ENCODE measurements at regions of chr19 and their contacts with region 1.

Region 1: GRCh38 chr19:4375164-4376027 is 25.0 kb downstream of the SH3GL1 start:
- DNase-seq: peak; percentile 90
- ATAC-seq: peak; percentile 78
- H3K4me3 ChIP-seq: peak overlapping the region; percentile 52
- H3K27ac ChIP-seq: peak overlapping the region; percentile 93
- H3K4me1 ChIP-seq: peaks cover 88% of the 10 kb centered on the region
- H3K27me3 ChIP-seq: no peaks in the 10 kb centered on the region
- CTCF ChIP-seq: peak; percentile 58 to 69 (median 58)
- EP300 ChIP-seq: no peak
- POLR2A ChIP-seq: peak; percentile 18; the same call in 1 of the 2 replicates
- RAD21 ChIP-seq: 0 out of 2 replicates have a peak, but pooled peaks have one; percentile 27

Region 2: DNA sequence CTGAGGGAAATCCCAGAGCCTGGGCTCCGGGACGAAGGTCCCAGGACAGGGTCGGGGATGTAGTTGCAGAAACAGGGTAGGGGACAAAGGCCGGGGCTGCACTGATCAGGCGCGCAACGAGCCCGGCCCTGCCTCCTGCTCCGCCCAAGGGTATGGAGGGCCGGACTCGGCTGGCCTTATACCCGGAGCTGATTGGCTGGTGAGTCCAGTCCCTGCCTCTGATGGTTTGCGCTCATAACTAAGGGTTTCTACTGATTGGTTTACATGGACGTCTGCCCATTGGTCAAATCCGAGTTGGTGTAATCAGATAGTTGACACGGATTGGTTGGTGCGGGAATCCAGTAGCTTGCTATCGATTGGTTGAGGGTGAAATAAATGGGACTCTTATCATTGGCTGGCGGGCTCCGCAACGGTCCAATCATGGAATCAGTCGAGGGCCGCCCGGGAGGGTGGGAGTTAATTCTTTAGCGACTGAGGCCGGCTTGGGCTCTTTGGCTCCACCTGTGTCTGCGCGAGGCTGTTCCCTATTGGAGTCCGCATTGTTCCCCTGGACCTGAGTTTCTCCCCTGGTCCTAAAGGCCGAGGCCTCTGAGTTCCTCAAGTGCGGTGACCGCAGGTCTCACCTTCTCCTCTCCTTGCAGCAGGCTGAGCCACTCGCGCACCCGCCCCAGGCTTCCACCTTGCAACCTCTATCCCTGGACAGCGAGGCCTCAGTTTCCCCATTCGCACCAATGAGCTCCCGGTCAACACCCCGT is 32.6 kb before region 1 on chr19:
- CTCF ChIA-PET with region 1: interaction called, 8 read pairs
- POLR2A ChIA-PET with region 1: interaction called, 10 read pairs
- RAD21 ChIA-PET with region 1: interaction called, 9 read pairs
- SMC1A ChIA-PET with region 1: no interaction called
- in situ Hi-C with region 1: no loop called
- intact Hi-C with region 1: no loop called
- DNase-seq: peak; percentile 100
- ATAC-seq: peak; percentile 95
- H3K4me3 ChIP-seq: peak overlapping the region; percentile 86
- H3K27ac ChIP-seq: peak overlapping the region; percentile 82
- H3K4me1 ChIP-seq: peaks cover 12% of the 10 kb centered on the region
- H3K27me3 ChIP-seq: no peaks in the 10 kb centered on the region
- CTCF ChIP-seq: peak; percentile 9 to 18 (median 12); a peak in 2 of 6 replicates
- EP300 ChIP-seq: no peak
- POLR2A ChIP-seq: peak; percentile 92
- RAD21 ChIP-seq: no peak

Region 3: DNA sequence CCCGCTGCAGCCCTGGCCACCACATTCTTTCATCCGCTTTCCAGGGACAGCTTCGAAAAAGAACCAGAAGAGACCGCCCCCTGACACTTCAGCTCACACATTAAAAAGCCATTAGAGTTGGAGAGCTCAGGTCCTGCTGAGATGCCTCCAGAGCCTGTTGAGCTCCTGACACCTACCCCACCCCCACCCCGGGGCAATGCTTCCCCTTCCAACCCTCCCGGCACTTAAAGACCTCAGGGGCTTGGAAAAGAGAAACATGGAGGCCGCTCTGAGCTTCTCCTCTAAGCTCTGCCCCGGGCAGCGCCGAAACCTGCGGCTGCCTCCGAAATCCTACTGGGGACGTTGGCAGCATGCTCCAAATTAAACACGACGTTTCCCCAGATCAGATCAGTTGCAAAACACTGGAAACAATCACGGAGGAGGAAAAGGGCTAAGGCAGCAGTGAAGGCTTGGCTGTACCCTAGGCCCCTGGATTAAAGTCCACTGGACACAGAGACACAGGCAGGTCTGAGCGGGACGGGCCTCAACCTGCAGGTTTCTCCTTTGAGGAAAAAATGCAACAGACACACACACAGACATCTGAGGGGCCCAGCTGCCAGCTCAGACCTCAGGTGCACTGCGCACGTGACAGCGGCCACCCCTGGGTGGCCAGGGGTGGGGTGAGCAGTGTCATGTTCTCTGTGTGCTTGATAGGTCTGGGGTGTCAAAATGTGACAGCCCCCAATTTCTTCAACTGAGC is 15.3 kb after region 1 on chr19:
- CTCF ChIA-PET with region 1: interaction called, 18 read pairs
- POLR2A ChIA-PET with region 1: interaction called, 110 read pairs
- RAD21 ChIA-PET with region 1: interaction called, 8 read pairs
- SMC1A ChIA-PET with region 1: interaction called, 27 read pairs
- in situ Hi-C with region 1: no loop called
- intact Hi-C with region 1: loop called (anchors 1 kb)
- DNase-seq: no peak
- ATAC-seq: no peak
- H3K4me3 ChIP-seq: no peak overlapping the region
- H3K27ac ChIP-seq: no peak overlapping the region
- H3K4me1 ChIP-seq: peaks cover 8% of the 10 kb centered on the region
- H3K27me3 ChIP-seq: no peaks in the 10 kb centered on the region
- CTCF ChIP-seq: no peak
- EP300 ChIP-seq: no peak
- POLR2A ChIP-seq: no peak
- RAD21 ChIP-seq: no peak